Ascending aorta (tissue), 2 donors: ENCODE measurements at regions of chr17 and their contacts with region 1.

Region 1: GRCh38 chr17:36948717-36949460 is at the start of gene AATF:
- DNase-seq: peak; percentile 87 to 98
- H3K4me3 ChIP-seq: peak within 1 kb of the TSS; percentile 78 to 91
- H3K27ac ChIP-seq: peak within 1 kb of the TSS; percentile 89 to 96
- H3K4me1 ChIP-seq: peaks cover 0 to 18% of the 10 kb centered on the region in 2 donors
- H3K27me3 ChIP-seq: peaks cover 16% of the 10 kb centered on the region
- CTCF ChIP-seq: no peak
- total RNA-seq, gene AATF: 19.5 TPM

Region 2: DNA sequence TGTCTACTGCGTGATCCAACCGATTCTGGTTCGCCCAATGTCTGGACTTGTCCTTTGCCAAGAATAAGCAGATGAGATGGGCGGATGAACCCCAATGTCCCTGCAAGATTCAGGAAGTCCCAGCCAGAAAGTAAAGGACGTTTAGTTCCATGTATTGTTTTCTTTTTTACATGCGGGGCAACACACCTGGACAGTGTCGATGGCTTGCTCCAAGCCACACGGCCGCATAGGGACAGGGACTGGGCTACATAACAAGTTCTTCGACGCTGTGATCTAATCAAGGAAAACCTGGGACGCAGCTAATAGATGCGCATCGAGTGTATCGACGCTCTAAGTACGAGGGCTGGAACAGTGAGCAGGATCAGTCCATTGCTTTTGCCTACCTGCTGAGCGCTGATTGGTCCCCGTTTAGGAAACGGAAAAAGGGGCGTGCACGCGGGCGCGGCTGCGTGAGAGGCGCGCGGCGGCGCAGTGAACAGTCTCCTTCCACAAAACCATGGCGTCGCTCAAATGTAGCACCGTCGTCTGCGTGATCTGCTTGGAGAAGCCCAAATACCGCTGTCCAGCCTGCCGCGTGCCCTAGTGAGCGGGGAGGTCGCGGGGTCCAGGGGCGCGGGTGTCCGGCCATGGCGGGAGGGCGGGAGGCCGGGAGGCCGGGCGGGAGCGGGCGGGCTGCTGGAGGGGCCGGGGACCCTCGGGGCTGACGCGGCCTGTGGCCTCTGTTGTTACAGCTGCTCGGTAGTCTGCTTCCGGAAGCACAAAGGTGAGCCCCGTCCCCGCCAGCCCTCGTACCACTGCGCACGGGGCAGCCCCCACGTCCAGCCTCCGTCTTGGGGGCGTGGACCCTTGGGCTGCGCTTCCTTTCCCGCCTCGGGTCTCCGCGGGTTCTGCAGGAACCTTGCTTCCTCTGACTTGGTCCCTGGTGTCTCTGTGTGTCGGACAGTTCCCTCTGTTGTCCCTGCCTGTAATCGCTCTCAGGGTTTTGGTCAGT is 462.4 kb before region 1 on chr17 and contains the start of gene ZNHIT3:
- intact Hi-C with region 1: loop called (anchors 5 kb)
- DNase-seq: peak; percentile 77 to 96
- H3K4me3 ChIP-seq: peak within 1 kb of the TSS; percentile 80 to 99
- H3K27ac ChIP-seq: peak within 1 kb of the TSS; percentile 71 to 91
- H3K4me1 ChIP-seq: peaks cover 5 to 24% of the 10 kb centered on the region in 2 donors
- H3K27me3 ChIP-seq: no peaks in the 10 kb centered on the region
- CTCF ChIP-seq: no peak
- total RNA-seq, gene ZNHIT3: 49.4 TPM

Region 3: DNA sequence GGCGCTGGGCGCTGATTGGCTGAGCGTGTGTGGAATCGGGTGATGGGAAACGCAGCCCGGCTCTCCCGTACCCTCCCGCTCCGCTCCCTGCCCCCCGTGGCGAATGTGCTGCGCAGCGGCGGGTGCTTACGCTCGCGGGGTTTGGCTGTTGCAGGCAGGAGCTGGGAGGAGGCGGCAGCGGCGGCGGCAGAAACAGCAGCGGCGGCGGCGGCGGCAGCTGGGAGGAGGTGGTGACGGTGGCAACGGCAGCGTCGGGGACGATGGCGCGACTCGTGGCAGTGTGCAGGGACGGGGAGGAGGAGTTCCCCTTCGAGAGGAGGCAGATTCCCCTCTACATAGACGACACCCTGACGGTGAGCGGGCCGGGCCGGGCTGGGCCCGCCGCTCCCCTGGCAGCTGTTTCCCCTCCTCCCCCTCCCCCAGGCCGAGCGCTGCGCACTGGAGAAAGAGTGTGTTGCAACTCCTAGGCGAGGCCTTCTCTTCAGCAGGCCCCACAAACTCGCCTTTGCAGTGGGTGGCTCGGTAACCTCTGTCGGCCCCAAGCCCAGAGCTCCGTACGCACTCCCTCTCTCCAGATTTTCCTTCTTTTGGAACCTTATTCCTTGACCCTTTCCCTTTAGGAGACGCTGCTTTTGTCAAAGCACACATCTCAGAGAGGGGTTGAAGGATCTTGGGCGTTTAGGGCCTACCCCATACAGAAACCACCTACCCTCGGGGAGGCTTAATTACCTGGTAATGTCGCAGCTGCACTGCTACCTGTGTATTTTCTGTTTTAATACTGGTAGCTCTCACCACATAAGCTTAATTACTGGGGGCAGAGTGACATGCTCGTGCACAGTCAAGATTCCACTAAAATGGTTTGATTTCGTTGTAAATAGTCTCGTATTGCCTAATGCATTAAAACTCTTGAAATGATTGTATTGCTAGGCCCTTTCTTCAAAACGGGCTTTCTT is 403.1 kb before region 1 on chr17:
- intact Hi-C with region 1: loop called (anchors 1 kb)
- DNase-seq: peak; percentile 94 to 98
- H3K4me3 ChIP-seq: peak overlapping the region; percentile 95 to 98
- H3K27ac ChIP-seq: peak overlapping the region; percentile 99 to 100
- H3K4me1 ChIP-seq: peaks cover 16 to 35% of the 10 kb centered on the region in 2 donors
- H3K27me3 ChIP-seq: no peaks in the 10 kb centered on the region
- CTCF ChIP-seq: no peak

Region 4: GRCh38 chr17:37358830-37359681 is 410.2 kb after region 1 on chr17:
- intact Hi-C with region 1: loop called (anchors 10 kb)
- DNase-seq: peak; percentile 87 to 98
- H3K4me3 ChIP-seq: peak overlapping the region; percentile 77
- H3K27ac ChIP-seq: peak overlapping the region; percentile 79 to 83
- H3K4me1 ChIP-seq: peaks cover 5 to 6% of the 10 kb centered on the region in 2 donors
- H3K27me3 ChIP-seq: no peaks in the 10 kb centered on the region
- CTCF ChIP-seq: peak; percentile 19 to 42 (median 20)

Region 5: GRCh38 chr17:37609170-37610040 is 660.5 kb after region 1 on chr17 and contains the start of gene SYNRG:
- intact Hi-C with region 1: loop called (anchors 5 kb)
- DNase-seq: peak; percentile 89 to 99
- H3K4me3 ChIP-seq: peak within 1 kb of the TSS; percentile 69 to 96
- H3K27ac ChIP-seq: peak within 1 kb of the TSS; percentile 82 to 89
- H3K4me1 ChIP-seq: peaks cover 0 to 9% of the 10 kb centered on the region in 2 donors
- H3K27me3 ChIP-seq: no peaks in the 10 kb centered on the region
- CTCF ChIP-seq: peak; percentile 32 to 36 (median 35)
- total RNA-seq, gene SYNRG: 47.1 TPM